Esophagus muscularis mucosa (tissue), 4 donors: ENCODE measurements at regions of chr1 and their contacts with region 1.

Region 1: GRCh38 chr1:100132566-100133477 is at the starts of genes SASS6 and TRMT13:
- DNase-seq: peak; percentile 99
- H3K4me3 ChIP-seq: peak within 1 kb of the TSS; percentile 60 to 76 (median 74)
- H3K27ac ChIP-seq: peak within 1 kb of the TSS; percentile 61 to 73 (median 70)
- H3K4me1 ChIP-seq: peaks cover 4 to 32% (median 28%) of the 10 kb centered on the region in 4 donors
- H3K27me3 ChIP-seq: no peaks in the 10 kb centered on the region
- CTCF ChIP-seq: peak in 1 of 3 experiments; percentile 7
- EP300 ChIP-seq: no peak
- POLR2A ChIP-seq: no peak
- total RNA-seq, gene SASS6: 1.2 to 3.0 (median 2.4) TPM
- total RNA-seq, gene TRMT13: 6.2 to 25.7 (median 9.3) TPM

Region 2: DNA sequence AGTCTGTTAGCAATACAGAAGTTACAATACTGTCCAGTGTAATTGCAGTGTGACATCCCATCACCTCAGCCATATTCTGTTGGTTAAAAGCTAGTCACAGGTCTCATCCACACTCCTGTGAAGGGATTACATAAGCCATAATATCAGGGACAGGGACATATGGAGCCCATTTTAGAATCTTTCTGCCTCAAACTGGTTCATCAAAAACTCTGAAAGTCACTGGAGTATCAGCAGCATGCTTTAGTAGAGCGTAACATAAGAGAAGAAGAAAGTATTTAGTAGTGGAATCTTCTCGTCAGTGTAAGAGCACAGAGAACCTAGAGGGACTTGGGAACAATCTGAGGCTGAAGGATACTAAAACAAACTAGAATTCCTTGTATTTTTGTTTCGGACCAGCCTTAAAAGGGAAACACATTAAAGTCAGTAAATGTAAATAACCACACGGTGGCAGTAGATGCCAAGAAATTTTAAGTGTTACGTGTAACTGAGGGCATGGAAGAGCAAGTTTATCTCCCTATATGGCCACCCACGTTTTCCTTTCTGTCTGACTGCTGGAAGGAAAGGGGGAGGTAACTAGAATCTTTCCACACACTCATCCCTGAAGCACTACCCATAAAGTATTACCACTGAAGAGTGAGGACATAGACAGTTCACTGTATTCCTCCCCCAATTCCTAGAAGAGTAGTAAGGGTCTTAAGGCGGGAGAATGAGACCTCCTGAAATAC is 324.3 kb before region 1 on chr1:
- intact Hi-C with region 1: no loop called
- DNase-seq: no peak
- H3K4me3 ChIP-seq: peak overlapping the region in 3 of 4 donors; percentile 8 to 28 (median 24)
- H3K27ac ChIP-seq: peak overlapping the region; percentile 74 to 82 (median 78)
- H3K4me1 ChIP-seq: peaks cover 6 to 13% (median 12%) of the 10 kb centered on the region in 4 donors
- H3K27me3 ChIP-seq: no peaks in the 10 kb centered on the region
- CTCF ChIP-seq: peak; percentile 68 to 72 (median 68)
- EP300 ChIP-seq: no peak
- POLR2A ChIP-seq: no peak

Region 3: GRCh38 chr1:99849744-99850458 is 282.9 kb before region 1 on chr1 and contains the start of gene AGL:
- intact Hi-C with region 1: loop called (anchors 5 kb)
- DNase-seq: peak; percentile 94
- H3K4me3 ChIP-seq: peak within 1 kb of the TSS; percentile 71 to 96 (median 84)
- H3K27ac ChIP-seq: peak within 1 kb of the TSS; percentile 88 to 95 (median 92)
- H3K4me1 ChIP-seq: peaks cover 19 to 41% (median 33%) of the 10 kb centered on the region in 4 donors
- H3K27me3 ChIP-seq: no peaks in the 10 kb centered on the region
- CTCF ChIP-seq: no peak
- EP300 ChIP-seq: no peak
- POLR2A ChIP-seq: peak; percentile 37
- total RNA-seq, gene AGL: 99.2 to 153 (median 128) TPM

Region 4: DNA sequence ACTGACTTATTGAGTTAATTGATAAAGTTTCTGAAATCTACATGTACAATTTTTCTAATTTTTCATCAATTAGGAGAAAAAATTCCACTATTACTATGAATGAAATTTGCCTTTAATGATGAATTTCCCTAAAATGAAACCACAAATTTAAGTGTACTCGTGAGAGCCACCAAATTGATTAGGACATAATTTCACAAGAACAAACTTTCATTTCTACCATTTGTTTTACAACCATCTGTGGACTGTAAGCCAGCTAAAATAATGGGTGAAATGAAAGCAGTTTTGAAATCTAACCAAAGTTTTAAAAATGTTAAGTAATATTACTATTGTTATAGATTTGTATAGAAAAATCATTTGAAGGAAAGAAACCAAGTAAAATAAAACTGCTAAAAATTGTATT is 240.8 kb before region 1 on chr1:
- intact Hi-C with region 1: no loop called
- DNase-seq: no peak
- H3K4me3 ChIP-seq: no peak overlapping the region
- H3K27ac ChIP-seq: no peak overlapping the region
- H3K4me1 ChIP-seq: no peaks in the 10 kb centered on the region
- H3K27me3 ChIP-seq: no peaks in the 10 kb centered on the region
- CTCF ChIP-seq: no peak
- EP300 ChIP-seq: no peak
- POLR2A ChIP-seq: no peak

Region 5: GRCh38 chr1:100037927-100038659 is 94.7 kb before region 1 on chr1:
- intact Hi-C with region 1: loop called (anchors 5 kb)
- DNase-seq: peak; percentile 96
- H3K4me3 ChIP-seq: peak overlapping the region; percentile 80 to 98 (median 82)
- H3K27ac ChIP-seq: peak overlapping the region; percentile 97 to 100 (median 98)
- H3K4me1 ChIP-seq: peaks cover 18 to 60% (median 52%) of the 10 kb centered on the region in 4 donors
- H3K27me3 ChIP-seq: no peaks in the 10 kb centered on the region
- CTCF ChIP-seq: no peak
- EP300 ChIP-seq: no peak
- POLR2A ChIP-seq: peak; percentile 81

Region 6: DNA sequence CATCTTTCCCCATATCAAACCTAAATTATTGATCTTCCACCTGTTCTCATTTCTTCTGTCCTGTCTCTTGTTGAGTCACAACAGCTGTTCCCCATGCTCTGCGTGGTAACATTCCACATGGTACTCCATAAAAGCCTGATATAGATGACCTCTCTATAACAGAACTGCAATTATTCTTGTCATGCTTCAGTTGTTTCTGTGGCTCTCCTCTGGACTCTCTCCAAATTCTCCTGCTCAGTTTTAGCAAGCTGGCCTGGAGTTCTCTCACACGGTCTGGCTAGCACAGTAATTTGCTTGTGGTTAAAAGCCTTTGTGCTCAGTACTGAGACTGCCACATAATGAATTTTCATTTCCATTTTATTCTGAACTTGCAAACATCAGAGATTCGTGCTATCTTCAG is 55.8 kb after region 1 on chr1:
- intact Hi-C with region 1: no loop called
- DNase-seq: no peak
- H3K4me3 ChIP-seq: no peak overlapping the region
- H3K27ac ChIP-seq: no peak overlapping the region
- H3K4me1 ChIP-seq: peaks cover 9 to 16% (median 15%) of the 10 kb centered on the region in 4 donors
- H3K27me3 ChIP-seq: no peaks in the 10 kb centered on the region
- CTCF ChIP-seq: no peak
- EP300 ChIP-seq: no peak
- POLR2A ChIP-seq: no peak

Region 7: DNA sequence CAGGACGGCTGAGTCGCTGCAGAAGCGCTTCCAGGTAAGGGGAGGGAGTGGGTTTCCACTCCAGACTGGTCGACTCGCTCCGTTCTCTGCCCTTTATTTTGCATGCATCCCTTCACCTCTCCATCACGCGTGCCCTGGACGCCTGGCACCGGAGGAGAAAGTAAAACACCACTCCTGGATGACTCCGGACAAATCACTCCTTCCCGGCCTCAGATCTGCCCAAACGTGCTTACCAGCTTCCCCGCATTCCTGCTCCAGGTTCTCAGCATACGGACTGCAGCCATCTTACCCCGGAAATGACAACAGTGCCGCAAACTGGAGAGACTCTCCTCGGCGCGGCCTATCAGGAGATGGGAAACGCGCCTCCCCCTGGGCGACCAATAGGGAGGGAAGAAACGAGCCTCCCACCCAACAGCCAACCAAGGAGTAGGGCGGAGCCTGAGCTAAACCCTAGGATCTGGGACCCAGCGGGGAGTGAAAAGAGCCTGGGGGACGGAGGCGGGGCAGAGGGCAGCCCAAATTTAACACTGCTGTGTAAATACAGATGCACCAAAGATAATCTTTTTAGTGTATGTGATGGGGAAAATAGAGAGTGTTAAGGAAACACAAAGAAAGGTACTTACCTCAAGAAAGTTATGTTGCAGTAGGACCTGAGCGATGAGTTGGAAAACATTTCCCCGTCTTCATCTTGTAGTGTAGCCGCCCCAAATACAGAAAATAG is 116.9 kb after region 1 on chr1 and contains the start of gene DBT:
- intact Hi-C with region 1: loop called (anchors 5 kb)
- DNase-seq: peak; percentile 99
- H3K4me3 ChIP-seq: peak within 1 kb of the TSS; percentile 62 to 89 (median 76)
- H3K27ac ChIP-seq: peak within 1 kb of the TSS; percentile 80 to 95 (median 89)
- H3K4me1 ChIP-seq: peaks cover 9 to 27% (median 25%) of the 10 kb centered on the region in 4 donors
- H3K27me3 ChIP-seq: no peaks in the 10 kb centered on the region
- CTCF ChIP-seq: no peak
- EP300 ChIP-seq: no peak
- POLR2A ChIP-seq: no peak
- total RNA-seq, gene DBT: 9.1 to 14.2 (median 12.6) TPM